Colonic mucosa (tissue), 4 donors: ENCODE measurements at regions of chr9 and their contacts with region 1.

Region 1: GRCh38 chr9:33330005-33330404 is 39.7 kb downstream of the NFX1 start:
- DNase-seq: peak; percentile 19
- H3K4me3 ChIP-seq: no peak overlapping the region
- H3K27ac ChIP-seq: peak overlapping the region; percentile 82
- H3K4me1 ChIP-seq: peaks cover 12% of the 10 kb centered on the region
- H3K27me3 ChIP-seq: no peaks in the 10 kb centered on the region
- CTCF ChIP-seq: no peak

Region 2: DNA sequence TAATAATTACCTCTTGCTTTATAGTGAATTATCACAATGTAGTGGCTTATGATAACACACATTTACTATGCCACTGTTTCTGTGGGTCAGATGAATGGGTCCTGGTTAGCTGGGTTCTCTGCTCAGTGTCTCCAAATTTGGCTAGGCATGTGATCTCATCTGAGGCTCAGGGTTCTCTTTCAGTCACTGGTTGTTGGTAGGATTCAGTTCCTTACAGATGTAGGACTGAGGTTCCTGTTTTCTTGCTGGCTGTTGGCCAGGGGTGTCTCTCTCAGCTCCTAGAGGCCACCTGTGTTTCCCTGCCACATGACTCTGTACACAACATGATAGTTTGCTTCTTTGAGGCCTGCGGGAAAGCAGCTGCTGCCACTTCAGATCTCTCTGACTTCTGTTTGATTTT is 32.6 kb before region 1 on chr9:
- intact Hi-C with region 1: loop called (anchors 5 kb)
- DNase-seq: peak; percentile 75
- H3K4me3 ChIP-seq: no peak overlapping the region
- H3K27ac ChIP-seq: peak overlapping the region; percentile 74
- H3K4me1 ChIP-seq: peaks cover 13% of the 10 kb centered on the region
- H3K27me3 ChIP-seq: no peaks in the 10 kb centered on the region
- CTCF ChIP-seq: no peak